ENCODE measurements at regions of chr16 and their contacts with region 1.

Region 1: GRCh38 chr16:29745853-29746345 is at the start of gene C16orf54:
- DNase-seq: peak in 1 of 5 donors; percentile 19
- H3K4me3 ChIP-seq: no peak within 1 kb of the TSS
- H3K27ac ChIP-seq: no peak within 1 kb of the TSS
- H3K4me1 ChIP-seq: no peaks in the 10 kb centered on the region
- H3K27me3 ChIP-seq: no peaks in the 10 kb centered on the region
- CTCF ChIP-seq: no peak
- EP300 ChIP-seq: no peak
- POLR2A ChIP-seq: no peak
- total RNA-seq, gene C16orf54: 0.12 to 0.72 (median 0.30) TPM

Region 2: DNA sequence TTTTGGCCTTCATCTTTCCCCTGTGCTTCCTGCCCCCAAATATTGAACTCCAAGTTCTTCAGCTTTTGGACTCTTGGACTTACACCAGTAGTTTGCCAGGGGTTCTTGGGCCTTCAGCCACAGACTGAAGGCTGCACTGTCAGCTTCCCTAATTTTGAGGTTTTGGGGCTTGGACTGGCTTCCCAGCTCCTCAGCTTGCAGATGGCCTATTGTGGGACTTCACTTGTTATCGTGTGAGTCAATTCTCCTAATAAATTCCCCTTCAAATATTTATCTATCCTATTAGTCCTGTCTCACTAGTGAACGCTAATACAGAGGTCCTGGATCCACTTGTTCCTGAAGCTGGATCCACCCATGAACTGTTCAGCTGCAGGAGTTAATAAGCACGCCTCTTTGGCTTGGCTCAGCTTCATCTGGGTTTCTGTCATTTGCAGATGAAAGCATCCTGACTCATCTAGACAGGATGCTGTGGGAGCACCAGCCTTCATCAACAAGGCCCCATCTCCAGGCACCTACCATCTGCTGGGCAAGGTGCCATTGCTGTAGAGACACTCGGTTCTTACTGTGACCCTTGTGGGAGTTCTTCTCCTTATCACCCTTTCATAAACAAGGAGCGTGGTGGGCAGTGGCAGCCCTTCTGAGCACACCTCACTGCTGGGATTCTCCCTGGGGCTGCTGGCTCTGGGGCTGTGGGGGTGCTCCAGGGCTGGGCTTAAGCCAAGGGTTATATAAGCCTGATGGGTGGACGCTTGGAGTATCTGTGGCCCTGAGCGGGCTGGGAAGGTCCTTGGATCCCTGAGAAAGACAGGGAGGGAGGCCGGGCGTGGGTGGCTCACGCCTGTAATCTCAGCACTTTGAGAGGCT is 737.9 kb before region 1 on chr16:
- intact Hi-C with region 1: loop called in 1 of 4 experiments (anchors 10 kb)
- DNase-seq: no peak
- H3K4me3 ChIP-seq: no peak overlapping the region
- H3K27ac ChIP-seq: no peak overlapping the region
- H3K4me1 ChIP-seq: no peaks in the 10 kb centered on the region
- H3K27me3 ChIP-seq: no peaks in the 10 kb centered on the region
- CTCF ChIP-seq: no peak
- EP300 ChIP-seq: no peak
- POLR2A ChIP-seq: no peak

Region 3: GRCh38 chr16:29790183-29790952 is 44.5 kb after region 1 on chr16 and contains the start of gene KIF22:
- intact Hi-C with region 1: loop called in 1 of 4 experiments (anchors 10 kb)
- DNase-seq: peak; percentile 99 to 100 (median 99)
- H3K4me3 ChIP-seq: peak within 1 kb of the TSS; percentile 62
- H3K27ac ChIP-seq: peak within 1 kb of the TSS; percentile 44 to 78
- H3K4me1 ChIP-seq: peaks cover 14% of the 10 kb centered on the region
- H3K27me3 ChIP-seq: no peaks in the 10 kb centered on the region
- CTCF ChIP-seq: peak; percentile 74 to 96 (median 90)
- EP300 ChIP-seq: no peak
- POLR2A ChIP-seq: peak; percentile 48
- total RNA-seq, gene KIF22: 15.9 to 31.0 (median 20.7) TPM

Region 4: GRCh38 chr16:29868396-29869009 is 122.6 kb after region 1 on chr16:
- intact Hi-C with region 1: no loop called
- DNase-seq: no peak
- H3K4me3 ChIP-seq: no peak overlapping the region
- H3K27ac ChIP-seq: no peak overlapping the region
- H3K4me1 ChIP-seq: no peaks in the 10 kb centered on the region
- H3K27me3 ChIP-seq: no peaks in the 10 kb centered on the region
- CTCF ChIP-seq: no peak
- EP300 ChIP-seq: no peak
- POLR2A ChIP-seq: no peak

Measured in ovary (tissue), 10 donors.